ENCODE measurements at regions of chr5 and their contacts with region 1.

Region 1: GRCh38 chr5:1763548-1763911 is 36.1 kb downstream of the MRPL36 start:
- H3K4me3 ChIP-seq: no peak overlapping the region
- H3K27ac ChIP-seq: no peak overlapping the region
- H3K4me1 ChIP-seq: no peaks in the 10 kb centered on the region
- CTCF ChIP-seq: peak; percentile 39; the same call in 1 of the 2 replicates

Region 2: DNA sequence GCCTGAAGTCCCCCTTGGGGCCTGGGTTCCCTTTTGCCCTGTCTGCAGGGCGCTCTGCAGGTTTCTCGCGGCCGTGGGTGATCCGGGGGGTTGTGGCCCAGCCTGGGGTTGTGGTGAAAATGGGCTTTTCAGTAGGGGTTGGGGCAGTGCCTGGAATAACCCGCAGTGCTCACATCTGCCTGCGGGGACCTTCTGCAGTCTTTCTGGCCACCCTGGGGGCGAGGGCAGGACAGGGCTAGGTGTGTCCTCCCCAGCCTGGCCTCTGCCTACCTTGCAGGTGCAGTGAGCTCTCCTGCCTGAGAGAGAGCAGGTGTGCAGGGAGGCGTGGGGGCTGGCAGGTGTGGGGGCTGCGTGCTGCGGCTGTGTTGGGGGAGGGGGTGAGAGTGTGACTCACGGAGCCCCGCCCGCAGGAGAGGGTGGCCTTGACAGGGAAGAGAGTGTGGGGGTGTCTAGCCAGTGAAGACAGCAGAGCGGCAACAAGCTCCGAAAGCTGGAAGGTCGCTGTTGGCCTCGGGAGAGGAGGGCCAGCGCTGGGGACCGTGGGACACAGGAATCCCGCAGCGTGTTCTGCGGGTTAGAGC is 95.3 kb before region 1 on chr5:
- CTCF ChIA-PET with region 1: interaction called, 11 read pairs
- POLR2A ChIA-PET with region 1: no interaction called
- H3K4me3 ChIP-seq: no peak overlapping the region
- H3K27ac ChIP-seq: no peak overlapping the region
- H3K4me1 ChIP-seq: no peaks in the 10 kb centered on the region; the same call in 1 of the 2 replicates
- CTCF ChIP-seq: 0 out of 2 replicates have a peak, but pooled peaks have one; percentile 16

Region 3: GRCh38 chr5:1946776-1947175 is 183.2 kb after region 1 on chr5:
- CTCF ChIA-PET with region 1: no interaction called
- POLR2A ChIA-PET with region 1: no interaction called
- H3K4me3 ChIP-seq: no peak overlapping the region
- H3K27ac ChIP-seq: no peak overlapping the region
- H3K4me1 ChIP-seq: no peaks in the 10 kb centered on the region
- CTCF ChIP-seq: no peak

Region 4: GRCh38 chr5:2038321-2039179 is 275.0 kb after region 1 on chr5:
- CTCF ChIA-PET with region 1: interaction called, 11 read pairs
- POLR2A ChIA-PET with region 1: no interaction called
- H3K4me3 ChIP-seq: peak overlapping the region; percentile 45
- H3K27ac ChIP-seq: no peak overlapping the region
- H3K4me1 ChIP-seq: no peaks in the 10 kb centered on the region
- CTCF ChIP-seq: peak; percentile 93; the same call in 1 of the 2 replicates

Measured in HEK293 (cell line).